CD8-positive, alpha-beta T cell (primary cell): ENCODE measurements at regions of chr18 and their contacts with region 1.

Region 1: GRCh38 chr18:35343936-35344735 is at the start of gene ZNF24:
- DNase-seq: peak; percentile 84 to 95 (median 92)
- ATAC-seq: peak; percentile 90
- H3K4me3 ChIP-seq: peak within 1 kb of the TSS; percentile 96 to 97
- H3K4me3 Mint-ChIP-seq: peak within 1 kb of the TSS; percentile 94
- H3K27ac ChIP-seq: peak within 1 kb of the TSS; percentile 98 to 99
- H3K27ac Mint-ChIP-seq: peak within 1 kb of the TSS; percentile 97
- H3K4me1 ChIP-seq: peaks cover 45% of the 10 kb centered on the region
- H3K4me1 Mint-ChIP-seq: peaks cover 48% of the 10 kb centered on the region
- H3K27me3 ChIP-seq: no peaks in the 10 kb centered on the region
- H3K27me3 Mint-ChIP-seq: no peaks in the 10 kb centered on the region
- CTCF ChIP-seq: no peak
- total RNA-seq, gene ZNF24: 55.3 to 57.0 TPM

Region 2: DNA sequence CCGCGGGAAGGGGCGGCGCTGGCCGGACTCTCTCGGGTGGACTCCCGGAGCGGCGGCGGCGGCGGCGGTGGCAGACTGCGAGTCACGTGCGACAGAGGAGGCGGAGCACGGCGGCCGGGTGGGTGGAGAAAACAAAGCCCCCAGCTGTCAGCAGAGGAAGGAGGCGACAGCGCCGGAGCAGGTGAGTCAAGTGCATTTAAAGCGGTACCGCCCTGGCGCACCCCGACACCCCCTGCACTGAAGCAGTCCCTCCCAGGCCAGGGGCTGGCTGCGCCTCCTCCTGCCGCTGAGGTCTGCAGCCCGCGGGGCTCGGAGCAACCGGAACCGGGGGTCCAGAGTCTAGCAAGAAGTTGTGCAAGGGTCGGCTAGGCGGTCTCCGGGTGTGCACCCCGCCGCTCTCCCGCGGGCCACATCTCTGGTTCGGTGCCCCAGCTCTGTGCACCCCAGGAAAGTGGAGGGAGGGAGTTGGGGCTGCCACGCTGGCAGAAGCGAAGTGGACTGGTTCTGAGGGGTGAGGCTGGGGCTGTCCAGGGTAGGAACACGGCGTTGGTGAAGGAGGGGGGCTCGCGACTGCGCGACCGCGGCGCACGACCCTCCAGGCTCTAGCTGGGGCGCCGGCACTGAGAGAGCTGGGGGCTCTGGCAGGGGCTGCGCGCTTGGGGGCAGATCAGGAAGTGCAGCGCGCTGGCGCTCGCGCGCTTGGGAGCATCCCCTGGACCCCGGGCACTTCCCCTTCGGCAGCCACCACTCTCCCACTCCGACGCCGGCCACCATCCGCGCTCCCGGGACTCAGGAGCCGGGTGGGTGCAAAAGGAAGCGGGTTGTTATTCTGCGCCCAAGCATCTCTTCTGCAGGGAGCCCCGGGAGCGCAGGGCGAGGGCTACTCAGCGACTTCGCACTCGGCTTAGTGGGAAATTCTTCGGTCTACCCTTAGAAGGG is 367.0 kb before region 1 on chr18:
- CTCF ChIA-PET with region 1: no interaction called
- POLR2A ChIA-PET with region 1: no interaction called
- intact Hi-C with region 1: loop called (anchors 2 to 5 kb)
- DNase-seq: peak; percentile 55 to 89 (median 85)
- ATAC-seq: peak; percentile 81
- H3K4me3 ChIP-seq: peak overlapping the region; percentile 87 to 93
- H3K4me3 Mint-ChIP-seq: peak overlapping the region; percentile 96
- H3K27ac ChIP-seq: peak overlapping the region in 1 of 2 experiments; percentile 35
- H3K27ac Mint-ChIP-seq: peak overlapping the region; percentile 70
- H3K4me1 ChIP-seq: peaks cover 11% of the 10 kb centered on the region
- H3K4me1 Mint-ChIP-seq: peaks cover 26% of the 10 kb centered on the region
- H3K27me3 ChIP-seq: no peaks in the 10 kb centered on the region
- H3K27me3 Mint-ChIP-seq: no peaks in the 10 kb centered on the region
- CTCF ChIP-seq: no peak

Region 3: DNA sequence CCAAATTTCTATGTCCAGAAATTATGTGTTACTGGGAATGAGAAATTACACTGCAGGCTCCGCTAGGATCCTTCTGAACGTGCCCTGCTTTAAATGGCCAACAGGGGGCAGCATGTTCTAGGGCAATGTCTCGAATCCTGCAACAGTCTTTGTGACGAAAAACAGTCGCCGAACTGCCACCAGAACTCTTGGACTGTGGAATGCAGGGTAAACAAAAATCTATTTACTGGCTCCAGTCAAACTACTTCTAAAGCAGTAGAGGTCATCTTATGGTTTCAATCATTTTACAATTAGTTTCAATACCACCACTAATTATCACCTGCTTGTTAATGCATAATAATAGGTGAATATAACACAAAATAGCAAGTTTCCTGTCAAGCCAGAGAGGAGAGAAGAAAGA is 113.1 kb before region 1 on chr18:
- CTCF ChIA-PET with region 1: interaction called, 10 read pairs
- POLR2A ChIA-PET with region 1: no interaction called
- intact Hi-C with region 1: no loop called
- DNase-seq: peak; percentile 59 to 89 (median 80)
- ATAC-seq: peak; percentile 98
- H3K4me3 ChIP-seq: no peak overlapping the region
- H3K4me3 Mint-ChIP-seq: peak overlapping the region; percentile 50
- H3K27ac ChIP-seq: no peak overlapping the region
- H3K27ac Mint-ChIP-seq: no peak overlapping the region
- H3K4me1 ChIP-seq: no peaks in the 10 kb centered on the region
- H3K4me1 Mint-ChIP-seq: peaks cover 3% of the 10 kb centered on the region
- H3K27me3 ChIP-seq: peaks cover 0 to 3% of the 10 kb centered on the region in 2 experiments
- H3K27me3 Mint-ChIP-seq: no peaks in the 10 kb centered on the region
- CTCF ChIP-seq: peak; percentile 92

Region 4: DNA sequence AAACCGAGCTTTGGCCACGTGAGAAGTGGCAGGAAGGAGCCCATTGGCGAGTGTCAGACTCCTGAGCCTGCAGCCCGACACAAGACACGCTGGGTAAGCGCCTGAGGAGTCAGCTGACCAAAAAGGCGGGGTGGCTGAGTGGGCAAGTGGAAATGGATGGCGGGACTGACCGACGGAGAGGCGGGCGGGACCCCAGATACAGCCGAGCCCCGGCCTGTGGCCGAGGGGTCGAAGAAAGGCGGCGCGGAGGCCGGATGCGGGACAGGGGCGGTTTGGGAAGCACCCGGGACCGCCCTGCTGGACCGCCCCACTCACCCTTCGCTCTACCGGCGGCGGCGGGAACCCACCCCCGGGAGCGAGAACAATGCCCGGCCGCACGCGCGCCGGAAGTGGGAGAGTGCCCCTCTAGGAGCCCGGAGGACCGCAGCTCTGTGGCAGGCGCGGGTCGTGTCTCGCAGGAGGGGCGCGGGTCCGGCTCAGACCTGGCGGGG is 76.9 kb before region 1 on chr18:
- CTCF ChIA-PET with region 1: no interaction called
- POLR2A ChIA-PET with region 1: interaction called, 12 read pairs
- intact Hi-C with region 1: loop called (anchors 1 to 2 kb)
- DNase-seq: peak; percentile 44 to 86 (median 74)
- ATAC-seq: peak; percentile 84
- H3K4me3 ChIP-seq: peak overlapping the region; percentile 77 to 84
- H3K4me3 Mint-ChIP-seq: peak overlapping the region; percentile 97
- H3K27ac ChIP-seq: peak overlapping the region; percentile 69 to 87
- H3K27ac Mint-ChIP-seq: peak overlapping the region; percentile 97
- H3K4me1 ChIP-seq: peaks cover 7% of the 10 kb centered on the region
- H3K4me1 Mint-ChIP-seq: peaks cover 26% of the 10 kb centered on the region
- H3K27me3 ChIP-seq: no peaks in the 10 kb centered on the region
- H3K27me3 Mint-ChIP-seq: no peaks in the 10 kb centered on the region
- CTCF ChIP-seq: no peak

Region 5: GRCh38 chr18:35355140-35355618 is 11.0 kb after region 1 on chr18:
- CTCF ChIA-PET with region 1: interaction called, 7 read pairs
- POLR2A ChIA-PET with region 1: interaction called, 4 read pairs
- intact Hi-C with region 1: loop called in 1 of 2 experiments (anchors 1 kb)
- DNase-seq: peak; percentile 19 to 83 (median 59)
- ATAC-seq: peak; percentile 98
- H3K4me3 ChIP-seq: no peak overlapping the region
- H3K4me3 Mint-ChIP-seq: no peak overlapping the region
- H3K27ac ChIP-seq: no peak overlapping the region
- H3K27ac Mint-ChIP-seq: no peak overlapping the region
- H3K4me1 ChIP-seq: no peaks in the 10 kb centered on the region
- H3K4me1 Mint-ChIP-seq: peaks cover 4% of the 10 kb centered on the region
- H3K27me3 ChIP-seq: no peaks in the 10 kb centered on the region
- H3K27me3 Mint-ChIP-seq: peaks cover 2% of the 10 kb centered on the region
- CTCF ChIP-seq: peak; percentile 50

Region 6: DNA sequence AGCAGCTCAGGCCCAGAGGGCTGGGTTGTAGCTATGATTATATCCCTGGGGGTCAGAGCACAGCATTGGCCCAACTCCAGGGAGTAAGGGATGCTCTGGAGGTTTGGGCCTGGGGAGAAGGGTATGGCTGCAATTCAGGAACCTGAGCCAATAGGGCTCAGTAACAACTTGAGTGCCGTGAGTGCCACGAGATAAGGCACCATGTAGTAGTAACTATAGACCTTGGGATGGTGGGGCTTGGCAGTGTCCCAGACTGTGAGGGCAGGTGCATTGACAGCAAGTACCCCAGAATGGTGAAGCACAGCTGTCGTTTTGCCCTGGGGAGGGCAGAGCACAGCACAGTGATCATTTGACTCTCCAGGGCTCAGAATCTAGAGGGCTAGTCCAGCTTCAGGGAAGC is 78.1 kb after region 1 on chr18:
- CTCF ChIA-PET with region 1: no interaction called
- POLR2A ChIA-PET with region 1: no interaction called
- intact Hi-C with region 1: no loop called
- DNase-seq: no peak
- ATAC-seq: no peak
- H3K4me3 ChIP-seq: no peak overlapping the region
- H3K4me3 Mint-ChIP-seq: no peak overlapping the region
- H3K27ac ChIP-seq: no peak overlapping the region
- H3K27ac Mint-ChIP-seq: no peak overlapping the region
- H3K4me1 ChIP-seq: no peaks in the 10 kb centered on the region
- H3K4me1 Mint-ChIP-seq: no peaks in the 10 kb centered on the region
- H3K27me3 ChIP-seq: no peaks in the 10 kb centered on the region
- H3K27me3 Mint-ChIP-seq: no peaks in the 10 kb centered on the region
- CTCF ChIP-seq: no peak

Region 7: DNA sequence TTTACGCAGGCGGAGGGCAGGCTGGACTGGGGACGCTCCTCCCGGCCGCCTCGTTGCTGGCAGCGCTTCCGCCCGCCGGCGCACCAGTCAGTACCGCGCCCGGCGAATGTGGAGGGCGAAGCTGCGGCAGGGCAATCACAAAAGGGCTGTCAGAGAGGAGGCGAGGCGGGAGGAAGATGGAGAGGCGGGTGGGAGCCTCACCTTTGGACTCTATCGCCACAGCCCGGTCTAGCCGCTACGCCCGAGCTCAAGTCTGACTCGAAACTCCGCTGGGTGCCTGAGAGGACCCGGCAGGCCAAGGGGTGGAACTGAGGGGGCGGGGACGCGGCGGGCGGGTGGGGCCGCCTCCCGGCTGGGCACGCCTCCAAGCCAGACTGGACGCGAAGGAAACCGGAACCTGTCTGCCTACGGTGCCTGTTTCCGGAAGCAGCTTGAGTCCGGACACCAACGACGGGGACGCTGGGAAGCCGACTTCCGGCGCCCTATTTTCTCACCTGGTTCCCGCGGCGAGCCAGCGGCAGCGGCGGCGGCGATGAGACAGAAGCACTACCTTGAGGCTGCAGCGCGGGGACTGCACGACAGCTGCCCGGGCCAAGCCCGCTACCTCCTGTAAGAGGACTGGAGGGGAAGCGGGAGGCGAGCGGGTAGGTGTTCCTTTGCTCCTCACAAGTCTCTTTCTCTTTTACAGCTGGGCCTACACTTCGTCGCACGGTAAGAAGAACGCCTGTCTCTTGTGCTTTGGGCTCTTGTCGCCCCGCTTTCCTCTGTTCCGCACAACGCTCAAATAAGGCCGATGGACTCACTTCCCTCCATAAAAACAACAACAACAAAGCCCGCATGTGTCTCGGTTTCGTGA is 628.3 kb after region 1 on chr18 and contains the start of gene RMP24:
- CTCF ChIA-PET with region 1: no interaction called
- POLR2A ChIA-PET with region 1: no interaction called
- intact Hi-C with region 1: loop called (anchors 1 to 2 kb)
- DNase-seq: peak; percentile 88 to 97 (median 93)
- ATAC-seq: peak; percentile 84
- H3K4me3 ChIP-seq: peak within 1 kb of the TSS; percentile 60 to 89
- H3K4me3 Mint-ChIP-seq: peak within 1 kb of the TSS; percentile 94
- H3K27ac ChIP-seq: peak within 1 kb of the TSS; percentile 57 to 90
- H3K27ac Mint-ChIP-seq: peak within 1 kb of the TSS; percentile 98
- H3K4me1 ChIP-seq: peaks cover 35% of the 10 kb centered on the region
- H3K4me1 Mint-ChIP-seq: peaks cover 65% of the 10 kb centered on the region
- H3K27me3 ChIP-seq: no peaks in the 10 kb centered on the region
- H3K27me3 Mint-ChIP-seq: no peaks in the 10 kb centered on the region
- CTCF ChIP-seq: no peak

Region 8: GRCh38 chr18:36828630-36829361 is 1484.7 kb after region 1 on chr18 and contains the starts of genes KIAA1328 and TPGS2:
- CTCF ChIA-PET with region 1: no interaction called
- POLR2A ChIA-PET with region 1: no interaction called
- intact Hi-C with region 1: loop called (anchors 2 to 10 kb)
- DNase-seq: peak; percentile 75 to 94 (median 85)
- ATAC-seq: peak; percentile 90
- H3K4me3 ChIP-seq: peak within 1 kb of the TSS; percentile 99
- H3K4me3 Mint-ChIP-seq: peak within 1 kb of the TSS; percentile 81
- H3K27ac ChIP-seq: peak within 1 kb of the TSS; percentile 70 to 71
- H3K27ac Mint-ChIP-seq: peak within 1 kb of the TSS; percentile 93
- H3K4me1 ChIP-seq: peaks cover 22% of the 10 kb centered on the region
- H3K4me1 Mint-ChIP-seq: peaks cover 42% of the 10 kb centered on the region
- H3K27me3 ChIP-seq: no peaks in the 10 kb centered on the region
- H3K27me3 Mint-ChIP-seq: no peaks in the 10 kb centered on the region
- CTCF ChIP-seq: peak; percentile 58
- total RNA-seq, gene KIAA1328: 6.9 to 7.0 TPM
- total RNA-seq, gene TPGS2: 14.5 to 16.4 TPM